Heart right ventricle (tissue), 16 donors: ENCODE measurements at regions of chr17 and their contacts with region 1.

Region 1: GRCh38 chr17:39754161-39754951 is 16.6 kb downstream of the GRB7 start:
- DNase-seq: peak; percentile 90 to 93
- ATAC-seq: peak; percentile 93 to 96 (median 94)
- H3K4me3 ChIP-seq: peak overlapping the region; percentile 44 to 95 (median 66)
- H3K27ac ChIP-seq: peak overlapping the region; percentile 70 to 99 (median 94)
- H3K4me1 ChIP-seq: peaks cover 4 to 51% (median 32%) of the 10 kb centered on the region in 9 donors
- H3K27me3 ChIP-seq: peaks cover 0 to 3% (median 0%) of the 10 kb centered on the region in 7 donors
- CTCF ChIP-seq: peak; percentile 83 to 99 (median 97)

Region 2: GRCh38 chr17:39547713-39548478 is 206.5 kb before region 1 on chr17:
- intact Hi-C with region 1: loop called in 6 of 10 experiments (anchors 5 to 10 kb)
- DNase-seq: peak; percentile 54 to 69
- ATAC-seq: peak; percentile 49 to 83 (median 77)
- H3K4me3 ChIP-seq: no peak overlapping the region
- H3K27ac ChIP-seq: peak overlapping the region in 1 of 10 donors; percentile 29
- H3K4me1 ChIP-seq: peaks cover 0 to 28% (median 15%) of the 10 kb centered on the region in 9 donors
- H3K27me3 ChIP-seq: no peaks in the 10 kb centered on the region
- CTCF ChIP-seq: peak; percentile 87 to 96 (median 93)

Region 3: DNA sequence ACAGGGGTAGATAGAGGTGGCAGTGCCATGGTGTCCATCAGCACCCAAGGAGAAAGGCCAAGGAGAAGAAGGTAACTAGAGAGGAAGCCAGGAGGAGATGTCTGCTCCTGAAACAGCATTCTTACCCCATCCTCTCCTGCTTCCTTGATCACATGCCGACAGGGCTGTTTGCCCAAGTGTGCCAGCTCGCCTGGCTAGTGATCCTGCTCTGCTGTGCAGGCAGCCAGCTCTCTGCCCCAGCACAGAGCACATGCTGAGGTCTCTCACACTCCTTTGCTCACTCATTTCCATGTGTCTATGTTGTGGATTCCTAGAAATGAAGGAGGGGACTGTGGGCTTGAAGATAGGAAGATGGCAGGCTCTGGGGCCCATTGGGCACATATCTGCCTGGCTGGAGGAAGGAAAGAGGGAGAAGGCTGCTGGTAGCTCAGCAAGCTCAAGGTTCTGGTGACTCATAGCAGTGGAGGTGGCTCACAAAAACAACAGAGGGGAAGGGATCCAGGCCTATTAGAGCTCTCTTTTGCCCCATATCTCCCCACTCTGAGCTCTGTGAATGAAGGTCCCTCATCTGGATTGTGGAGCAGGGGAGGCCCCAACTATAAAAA is 200.9 kb before region 1 on chr17:
- intact Hi-C with region 1: loop called in 6 of 10 experiments (anchors 5 to 10 kb)
- DNase-seq: no peak
- ATAC-seq: no peak
- H3K4me3 ChIP-seq: no peak overlapping the region
- H3K27ac ChIP-seq: no peak overlapping the region
- H3K4me1 ChIP-seq: peaks cover 0 to 13% (median 6%) of the 10 kb centered on the region in 9 donors
- H3K27me3 ChIP-seq: no peaks in the 10 kb centered on the region
- CTCF ChIP-seq: no peak

Region 4: DNA sequence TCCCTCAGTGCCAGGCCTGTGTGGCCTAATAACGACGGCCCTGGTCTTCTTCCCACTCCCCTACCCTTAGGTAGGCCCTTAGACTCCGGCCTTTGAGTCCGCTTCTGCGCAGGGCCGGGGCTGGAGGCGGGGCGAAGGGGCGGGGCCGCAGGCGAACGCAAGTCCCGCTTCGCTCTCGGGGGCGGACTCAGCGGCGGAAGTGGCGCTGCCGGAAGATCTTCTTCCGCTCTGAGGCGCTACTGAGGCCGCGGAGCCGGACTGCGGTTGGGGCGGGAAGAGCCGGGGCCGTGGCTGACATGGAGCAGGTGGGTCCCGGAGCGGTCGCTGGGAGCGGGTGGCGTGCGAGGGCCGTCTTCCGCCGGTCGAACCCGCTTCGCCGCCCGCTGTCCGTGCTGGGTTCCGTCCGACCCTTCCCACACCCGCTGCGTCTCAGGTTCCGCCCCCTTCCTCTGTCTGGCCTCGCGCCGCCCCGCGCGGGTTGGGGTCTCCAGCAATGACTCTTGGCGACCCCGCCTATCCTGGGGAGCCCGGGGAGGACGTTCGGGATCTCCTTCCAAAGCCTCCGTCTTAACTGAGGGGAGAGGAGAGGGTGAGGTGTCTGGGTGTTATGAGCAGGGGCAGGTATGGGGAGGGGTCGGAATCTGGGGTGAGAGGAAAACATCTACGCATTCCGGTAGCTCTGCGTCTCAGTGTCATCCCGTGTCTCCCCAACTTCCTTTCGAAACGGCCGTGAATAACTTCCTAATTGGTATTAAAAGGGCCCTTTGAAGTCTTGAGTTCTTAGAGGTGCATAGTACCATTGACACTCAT is 117.2 kb before region 1 on chr17 and contains the start of gene STARD3:
- intact Hi-C with region 1: loop called in 4 of 10 experiments (anchors 5 kb)
- DNase-seq: peak; percentile 93 to 94
- ATAC-seq: peak; percentile 94 to 98 (median 96)
- H3K4me3 ChIP-seq: peak within 1 kb of the TSS; percentile 56 to 98 (median 82)
- H3K27ac ChIP-seq: peak within 1 kb of the TSS; percentile 62 to 99 (median 92)
- H3K4me1 ChIP-seq: peaks cover 11 to 73% (median 55%) of the 10 kb centered on the region in 9 donors
- H3K27me3 ChIP-seq: peaks cover 0 to 3% (median 0%) of the 10 kb centered on the region in 7 donors
- CTCF ChIP-seq: peak in 5 of 9 donors; percentile 19 to 46 (median 31)
- total RNA-seq, gene STARD3: 14.2 to 25.3 (median 19.6) TPM

Region 5: GRCh38 chr17:39668199-39668966 is 86.0 kb before region 1 on chr17 and contains the start of gene PNMT:
- intact Hi-C with region 1: loop called in 1 of 10 experiments (anchors 5 kb)
- DNase-seq: peak; percentile 68 to 83
- ATAC-seq: peak in 3 of 8 donors; percentile 2 to 31 (median 6)
- H3K4me3 ChIP-seq: peak within 1 kb of the TSS; percentile 24 to 77 (median 52)
- H3K27ac ChIP-seq: peak within 1 kb of the TSS; percentile 88 to 98 (median 94)
- H3K4me1 ChIP-seq: peaks cover 25 to 78% (median 51%) of the 10 kb centered on the region in 9 donors
- H3K27me3 ChIP-seq: peaks cover 0 to 59% (median 8%) of the 10 kb centered on the region in 7 donors
- CTCF ChIP-seq: peak; percentile 52 to 81 (median 65)
- total RNA-seq, gene PNMT: 2.7 to 12.8 (median 3.9) TPM

Region 6: DNA sequence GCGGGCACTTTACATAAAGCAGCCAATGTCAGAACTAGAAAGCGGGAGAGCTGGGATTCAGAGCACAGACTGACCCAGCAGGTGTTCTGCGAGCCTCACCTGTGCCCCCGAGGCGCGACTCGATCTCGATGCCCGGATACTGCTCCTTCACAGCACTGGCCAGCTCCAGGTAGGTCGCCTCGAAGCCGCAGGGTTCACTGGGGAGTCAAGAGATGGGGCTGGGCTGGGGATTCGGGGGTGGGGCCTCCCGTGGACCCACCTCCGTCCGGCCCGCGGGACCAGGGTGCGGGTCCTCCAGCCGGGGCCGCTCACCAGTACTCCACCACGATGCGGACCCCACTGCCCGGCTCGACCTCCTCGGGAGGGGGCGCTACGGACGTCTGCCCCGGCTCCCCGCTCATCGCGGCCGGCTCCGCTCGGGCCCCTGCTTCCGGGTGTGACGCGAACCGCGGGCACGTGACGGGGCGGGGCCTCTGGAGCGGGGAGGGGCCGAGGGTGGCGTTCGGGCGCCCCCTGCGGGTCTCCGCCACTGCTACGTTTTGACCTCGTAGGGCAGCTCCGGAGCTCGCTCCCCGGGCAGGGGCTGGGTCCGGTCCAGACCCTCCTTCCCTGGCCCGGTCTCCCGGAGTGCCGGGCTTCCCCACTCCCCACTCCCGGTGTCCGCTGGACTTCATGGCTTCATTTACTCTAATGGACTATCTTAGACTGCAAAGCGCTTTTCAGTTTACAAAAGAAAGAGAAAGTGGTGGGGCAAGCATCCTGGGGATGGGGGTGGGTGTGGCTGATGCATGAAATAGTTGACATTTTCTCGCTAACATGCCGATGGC is 24.0 kb before region 1 on chr17 and contains the start of gene MIEN1:
- intact Hi-C with region 1: loop called in 1 of 10 experiments (anchors 1 kb)
- DNase-seq: peak; percentile 90 to 95
- ATAC-seq: peak; percentile 95 to 98 (median 98)
- H3K4me3 ChIP-seq: peak within 1 kb of the TSS; percentile 69 to 93 (median 85)
- H3K27ac ChIP-seq: peak within 1 kb of the TSS; percentile 55 to 99 (median 92)
- H3K4me1 ChIP-seq: peaks cover 4 to 16% (median 9%) of the 10 kb centered on the region in 9 donors
- H3K27me3 ChIP-seq: peaks cover 0 to under 1% (median 0%) of the 10 kb centered on the region in 7 donors
- CTCF ChIP-seq: peak; percentile 87 to 98 (median 95)
- total RNA-seq, gene MIEN1: 27.7 to 68.4 (median 39.1) TPM

Region 7: DNA sequence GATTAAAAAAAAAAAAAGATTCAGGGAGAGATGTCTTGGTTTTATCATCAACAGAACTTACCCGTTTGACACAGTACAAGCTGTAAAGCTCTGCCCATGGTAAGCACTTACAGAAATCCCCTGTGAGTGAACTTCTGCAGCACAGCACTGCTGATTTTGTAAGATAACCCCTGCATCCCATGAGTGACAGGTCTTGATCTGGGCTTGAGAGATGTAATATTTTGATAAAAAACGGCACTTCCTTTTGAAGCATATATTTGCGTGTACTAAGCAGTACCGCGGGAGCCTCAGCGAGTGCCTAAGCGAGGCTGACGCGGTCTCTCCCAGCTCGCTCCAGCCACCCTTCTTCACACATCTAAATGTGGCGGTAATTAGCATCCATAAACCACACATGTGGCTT is 59.3 kb after region 1 on chr17:
- intact Hi-C with region 1: no loop called
- DNase-seq: no peak
- ATAC-seq: no peak
- H3K4me3 ChIP-seq: no peak overlapping the region
- H3K27ac ChIP-seq: peak overlapping the region in 1 of 10 donors; percentile 63
- H3K4me1 ChIP-seq: peaks cover 0 to 2% (median 0%) of the 10 kb centered on the region in 9 donors
- H3K27me3 ChIP-seq: peaks cover 0 to 26% (median 2%) of the 10 kb centered on the region in 7 donors
- CTCF ChIP-seq: no peak

Region 8: GRCh38 chr17:39952680-39953470 is 198.5 kb after region 1 on chr17:
- intact Hi-C with region 1: loop called in 1 of 10 experiments (anchors 10 kb)
- DNase-seq: peak; percentile 99 to 100
- ATAC-seq: peak; percentile 91 to 96 (median 94)
- H3K4me3 ChIP-seq: peak overlapping the region in 9 of 10 donors; percentile 35 to 56 (median 51)
- H3K27ac ChIP-seq: peak overlapping the region in 9 of 10 donors; percentile 54 to 76 (median 63)
- H3K4me1 ChIP-seq: peaks cover 0 to 31% (median 11%) of the 10 kb centered on the region in 9 donors
- H3K27me3 ChIP-seq: no peaks in the 10 kb centered on the region
- CTCF ChIP-seq: no peak